ENCODE measurements at regions of chr2 and their contacts with region 1.

Region 1: GRCh38 chr2:96760036-96760985 is at the start of gene CNNM4:
- DNase-seq: peak; percentile 93
- H3K4me3 Mint-ChIP-seq: peak within 1 kb of the TSS; percentile 78
- H3K27ac Mint-ChIP-seq: peak within 1 kb of the TSS; percentile 92
- H3K4me1 Mint-ChIP-seq: peaks cover 46% of the 10 kb centered on the region
- H3K27me3 Mint-ChIP-seq: no peaks in the 10 kb centered on the region
- total RNA-seq, gene CNNM4: 8.2 to 8.3 TPM

Region 2: DNA sequence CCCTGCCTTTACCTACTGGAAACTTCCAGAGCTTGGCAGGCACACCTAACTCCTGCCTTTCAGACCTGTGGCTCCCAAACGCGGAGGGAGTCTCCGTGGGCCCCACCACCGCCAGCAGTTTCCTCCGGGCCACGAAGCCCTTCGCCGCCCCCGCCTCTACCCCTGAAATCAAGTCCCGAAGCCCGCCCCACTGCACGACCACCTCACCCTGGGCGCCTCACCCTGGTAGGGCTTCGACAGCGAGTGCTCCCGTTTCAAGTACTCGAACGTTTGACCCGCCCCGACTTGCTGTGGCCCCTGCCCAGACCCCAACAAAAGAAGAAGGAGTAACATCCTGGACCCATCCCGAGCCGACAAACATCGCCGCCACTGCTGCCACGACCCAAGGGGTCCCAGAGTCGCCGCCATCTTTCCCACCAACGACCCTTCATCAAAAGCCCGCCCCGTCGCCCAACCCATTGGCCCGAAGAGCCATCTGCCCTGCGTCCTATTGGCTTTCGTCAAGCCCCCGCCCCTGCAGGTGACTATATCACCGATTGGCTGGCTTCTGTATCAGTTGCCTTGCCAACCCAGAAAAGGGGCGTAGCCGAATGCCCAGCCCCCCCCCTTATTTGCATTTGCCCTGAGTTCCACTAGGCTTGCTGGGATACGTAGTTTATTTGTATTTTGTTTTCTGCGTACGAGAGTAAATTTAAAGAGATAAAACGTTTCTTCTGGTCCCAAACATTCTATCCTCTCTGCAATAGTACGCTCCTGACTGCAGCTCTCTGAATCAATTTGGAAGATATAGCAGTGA is 20.5 kb before region 1 on chr2 and contains the start of gene LMAN2L:
- CTCF ChIA-PET with region 1: interaction called, 28 read pairs
- POLR2A ChIA-PET with region 1: no interaction called
- DNase-seq: peak; percentile 99
- H3K4me3 Mint-ChIP-seq: peak within 1 kb of the TSS; percentile 94
- H3K27ac Mint-ChIP-seq: peak within 1 kb of the TSS; percentile 89
- H3K4me1 Mint-ChIP-seq: peaks cover 43% of the 10 kb centered on the region
- H3K27me3 Mint-ChIP-seq: peaks cover 2% of the 10 kb centered on the region
- total RNA-seq, gene LMAN2L: 7.5 to 8.0 TPM

Region 3: GRCh38 chr2:96773922-96774321 is 13.6 kb after region 1 on chr2:
- CTCF ChIA-PET with region 1: interaction called, 23 read pairs
- POLR2A ChIA-PET with region 1: no interaction called
- DNase-seq: peak; percentile 70
- H3K4me3 Mint-ChIP-seq: peak overlapping the region; percentile 76
- H3K27ac Mint-ChIP-seq: peak overlapping the region; percentile 90
- H3K4me1 Mint-ChIP-seq: peaks cover 29% of the 10 kb centered on the region
- H3K27me3 Mint-ChIP-seq: no peaks in the 10 kb centered on the region

Region 4: DNA sequence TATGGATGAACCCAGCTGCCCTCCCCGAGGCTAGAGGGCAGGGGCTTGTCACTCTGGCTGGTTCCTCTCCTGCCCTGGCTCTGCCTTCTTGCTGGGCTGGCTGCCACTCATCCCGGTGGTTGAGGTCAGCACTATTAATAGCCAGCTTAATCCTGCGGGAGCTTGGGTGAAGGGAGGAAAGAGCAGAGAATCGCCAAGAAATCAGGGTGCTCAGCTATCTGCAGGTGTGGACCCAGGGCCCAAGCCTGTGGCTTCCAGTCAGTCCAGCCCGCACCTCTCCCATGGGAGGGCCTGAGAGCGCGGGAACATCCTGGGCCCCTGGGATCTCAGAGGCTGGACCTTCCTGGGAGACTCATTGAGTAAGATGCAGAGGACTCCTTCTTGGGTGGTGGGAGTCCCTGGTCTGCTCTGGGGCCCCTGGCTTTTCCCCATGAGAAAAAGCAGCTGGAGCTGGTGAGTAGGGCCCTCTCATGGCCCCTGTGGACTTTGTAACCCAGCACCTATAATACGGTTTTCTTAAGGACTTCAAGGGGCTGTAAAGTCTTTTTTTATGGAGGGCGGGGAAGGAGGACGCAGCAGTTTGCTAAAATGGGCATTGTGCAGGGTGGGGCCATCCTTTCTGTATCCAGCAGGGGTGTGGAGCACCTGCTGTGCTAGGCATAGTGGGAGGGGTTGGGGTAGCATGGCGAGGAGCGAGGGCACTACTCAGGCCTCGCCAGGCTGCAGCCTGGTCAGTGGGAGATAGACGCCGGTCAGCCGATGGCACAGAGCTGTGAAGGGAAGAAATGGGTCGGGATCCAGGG is 28.3 kb after region 1 on chr2:
- CTCF ChIA-PET with region 1: interaction called, 12 read pairs
- POLR2A ChIA-PET with region 1: no interaction called
- DNase-seq: no peak
- H3K4me3 Mint-ChIP-seq: no peak overlapping the region
- H3K27ac Mint-ChIP-seq: no peak overlapping the region
- H3K4me1 Mint-ChIP-seq: no peaks in the 10 kb centered on the region
- H3K27me3 Mint-ChIP-seq: no peaks in the 10 kb centered on the region

Region 5: DNA sequence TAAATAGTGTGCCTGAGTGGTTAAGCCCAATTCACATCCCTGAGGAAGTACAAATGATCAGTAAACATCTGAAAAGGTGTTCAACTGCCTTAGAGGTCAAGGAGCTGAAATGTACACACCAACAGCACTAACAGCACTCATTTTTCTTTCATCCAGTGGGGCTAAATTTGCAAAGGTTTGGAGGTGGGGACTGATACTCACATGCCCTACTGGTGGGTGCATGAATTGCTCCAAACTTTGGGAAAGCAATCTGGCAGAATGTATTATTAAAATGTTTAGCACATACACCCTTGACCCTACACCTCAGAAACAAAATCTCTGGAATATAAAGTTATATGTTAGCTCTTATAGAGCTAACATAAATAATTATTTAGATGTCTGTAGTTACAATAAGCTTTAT is 245.0 kb after region 1 on chr2:
- CTCF ChIA-PET with region 1: no interaction called
- POLR2A ChIA-PET with region 1: no interaction called
- DNase-seq: no peak
- H3K4me3 Mint-ChIP-seq: no peak overlapping the region
- H3K27ac Mint-ChIP-seq: no peak overlapping the region
- H3K4me1 Mint-ChIP-seq: no peaks in the 10 kb centered on the region
- H3K27me3 Mint-ChIP-seq: peaks cover 35% of the 10 kb centered on the region

Measured in activated CD4-positive, alpha-beta T cell treated with anti-CD3 and anti-CD28 coated beads, Interleukin-2, amount 10 ng/mL, durations not matched to agents 7 days and 5 days (primary cell).